Activated naive CD4-positive, alpha-beta T cell treated with anti-CD3 and anti-CD28 coated beads for 36 hours (primary cell): ENCODE measurements at regions of chr1 and their contacts with region 1.

Region 1: GRCh38 chr1:169485544-169486278 is at the start of gene SLC19A2:
- DNase-seq: peak; percentile 96
- H3K4me3 Mint-ChIP-seq: peak within 1 kb of the TSS; percentile 89
- H3K27ac Mint-ChIP-seq: peak within 1 kb of the TSS; percentile 80
- H3K4me1 Mint-ChIP-seq: peaks cover 48% of the 10 kb centered on the region
- H3K27me3 Mint-ChIP-seq: no peaks in the 10 kb centered on the region
- total RNA-seq, gene SLC19A2: 3.2 to 3.6 TPM

Region 2: DNA sequence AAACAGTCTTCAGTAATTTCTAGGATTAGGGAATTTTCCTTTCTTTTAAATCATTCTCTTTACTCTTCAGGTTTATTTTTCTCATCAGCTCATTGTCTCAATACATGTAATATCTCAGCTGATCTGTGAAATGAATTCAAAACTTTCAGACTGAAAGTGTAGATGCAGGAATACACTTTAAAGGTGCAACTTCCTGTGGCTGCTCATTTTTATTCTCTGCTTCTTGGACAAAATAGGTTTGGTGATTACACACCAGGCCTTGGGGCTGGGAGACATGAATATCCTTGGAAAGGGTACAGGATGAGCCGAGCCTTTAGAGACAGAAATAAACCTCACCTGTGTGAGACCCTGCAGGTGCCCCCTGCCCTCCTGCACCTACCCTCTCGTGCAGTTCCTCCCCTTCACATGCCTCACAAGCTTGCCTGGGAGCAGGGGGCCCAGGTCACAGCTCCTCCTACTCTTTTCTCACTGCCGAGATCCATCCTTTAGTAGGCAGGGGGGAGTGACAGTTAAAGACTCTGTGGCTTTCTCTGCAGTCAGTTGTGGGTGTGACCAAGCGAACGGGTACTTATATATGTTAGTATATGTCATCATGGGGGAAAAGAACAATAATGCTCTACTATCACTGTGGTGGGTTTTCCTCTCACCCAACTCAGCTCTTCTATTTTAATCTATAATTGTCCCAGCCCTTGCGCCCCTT is 965.5 kb before region 1 on chr1:
- CTCF ChIA-PET with region 1: no interaction called
- intact Hi-C with region 1: loop called (anchors 10 kb)
- DNase-seq: peak; percentile 59
- H3K4me3 Mint-ChIP-seq: peak overlapping the region; percentile 34
- H3K27ac Mint-ChIP-seq: peak overlapping the region; percentile 74
- H3K4me1 Mint-ChIP-seq: peaks cover 39% of the 10 kb centered on the region
- H3K27me3 Mint-ChIP-seq: no peaks in the 10 kb centered on the region

Region 3: DNA sequence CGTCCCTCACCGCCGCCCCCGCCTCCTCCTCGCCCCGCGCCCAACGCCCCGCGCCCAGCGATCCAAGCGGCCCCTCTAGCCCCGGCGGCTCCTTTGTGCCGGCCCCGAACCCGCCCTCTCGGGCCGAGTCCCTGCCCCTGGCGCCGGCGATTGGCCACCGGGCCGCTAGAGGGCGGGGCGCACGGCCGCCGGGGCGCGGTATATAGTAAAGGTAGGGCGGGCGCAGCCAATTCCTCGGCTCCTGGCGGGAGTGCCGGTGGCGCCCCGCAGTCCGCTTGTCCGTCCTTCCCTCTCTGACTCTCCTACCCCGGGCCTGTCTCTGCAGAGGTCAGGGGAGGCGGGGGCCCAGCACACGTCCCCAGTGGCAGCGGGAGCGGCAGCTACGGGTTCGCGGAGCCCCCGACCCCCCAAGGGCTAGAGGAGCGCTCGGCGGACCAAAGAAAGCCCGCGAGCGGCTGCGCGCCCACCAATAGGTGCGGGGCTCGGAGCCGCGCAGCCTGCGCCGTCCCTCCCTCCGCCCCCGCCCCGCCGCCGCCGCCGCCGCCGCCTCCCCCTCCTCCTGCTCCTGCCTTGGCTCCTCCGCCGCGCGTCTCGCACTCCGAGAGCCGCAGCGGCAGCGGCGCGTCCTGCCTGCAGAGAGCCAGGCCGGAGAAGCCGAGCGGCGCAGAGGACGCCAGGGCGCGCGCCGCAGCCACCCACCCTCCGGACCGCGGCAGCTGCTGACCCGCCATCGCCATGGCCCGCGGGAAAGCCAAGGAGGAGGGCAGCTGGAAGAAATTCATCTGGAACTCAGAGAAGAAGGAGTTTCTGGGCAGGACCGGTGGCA is 379.4 kb before region 1 on chr1 and contains the start of gene ATP1B1:
- CTCF ChIA-PET with region 1: no interaction called
- intact Hi-C with region 1: loop called (anchors 2 kb)
- DNase-seq: peak; percentile 78
- H3K4me3 Mint-ChIP-seq: peak within 1 kb of the TSS; percentile 77
- H3K27ac Mint-ChIP-seq: peak within 1 kb of the TSS; percentile 16
- H3K4me1 Mint-ChIP-seq: peaks cover 43% of the 10 kb centered on the region
- H3K27me3 Mint-ChIP-seq: peaks cover 15% of the 10 kb centered on the region
- total RNA-seq, gene ATP1B1: 5.6 to 6.2 TPM

Region 4: DNA sequence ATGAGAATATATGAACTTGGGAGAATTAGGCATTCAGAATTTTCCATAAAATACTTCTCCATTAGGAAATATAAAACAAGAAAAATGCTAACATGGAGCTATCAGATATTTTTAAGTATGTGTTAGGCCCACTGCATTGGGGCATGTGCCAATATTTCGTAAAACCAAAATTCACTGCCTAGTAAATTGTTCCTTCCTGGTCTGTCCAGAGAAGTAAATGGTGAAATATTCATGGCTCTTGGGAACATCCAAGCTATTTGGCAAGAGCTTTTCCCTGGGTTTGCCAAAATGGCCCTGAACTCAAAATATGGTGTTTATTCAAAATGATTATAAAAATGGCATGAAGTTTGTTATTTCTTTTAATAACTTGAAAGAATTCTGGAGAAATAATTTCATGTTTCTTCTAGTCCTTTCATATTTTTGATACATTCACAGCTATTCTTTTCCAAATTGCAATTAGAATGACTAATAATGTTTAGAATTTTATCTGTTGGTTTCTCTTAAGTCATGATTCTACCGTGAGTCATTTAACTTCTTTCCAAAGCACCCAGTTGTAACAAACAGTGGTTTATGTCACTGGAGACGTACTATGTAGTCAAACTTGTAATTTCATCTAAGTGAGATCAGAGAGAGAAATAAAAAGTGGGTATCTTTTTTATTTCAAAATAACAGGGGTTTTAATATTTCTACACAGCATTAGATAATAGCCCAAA is 25.8 kb after region 1 on chr1:
- CTCF ChIA-PET with region 1: no interaction called
- intact Hi-C with region 1: loop called (anchors 2 kb)
- DNase-seq: no peak
- H3K4me3 Mint-ChIP-seq: no peak overlapping the region
- H3K27ac Mint-ChIP-seq: peak overlapping the region; percentile 34
- H3K4me1 Mint-ChIP-seq: peaks cover 25% of the 10 kb centered on the region
- H3K27me3 Mint-ChIP-seq: no peaks in the 10 kb centered on the region

Region 5: DNA sequence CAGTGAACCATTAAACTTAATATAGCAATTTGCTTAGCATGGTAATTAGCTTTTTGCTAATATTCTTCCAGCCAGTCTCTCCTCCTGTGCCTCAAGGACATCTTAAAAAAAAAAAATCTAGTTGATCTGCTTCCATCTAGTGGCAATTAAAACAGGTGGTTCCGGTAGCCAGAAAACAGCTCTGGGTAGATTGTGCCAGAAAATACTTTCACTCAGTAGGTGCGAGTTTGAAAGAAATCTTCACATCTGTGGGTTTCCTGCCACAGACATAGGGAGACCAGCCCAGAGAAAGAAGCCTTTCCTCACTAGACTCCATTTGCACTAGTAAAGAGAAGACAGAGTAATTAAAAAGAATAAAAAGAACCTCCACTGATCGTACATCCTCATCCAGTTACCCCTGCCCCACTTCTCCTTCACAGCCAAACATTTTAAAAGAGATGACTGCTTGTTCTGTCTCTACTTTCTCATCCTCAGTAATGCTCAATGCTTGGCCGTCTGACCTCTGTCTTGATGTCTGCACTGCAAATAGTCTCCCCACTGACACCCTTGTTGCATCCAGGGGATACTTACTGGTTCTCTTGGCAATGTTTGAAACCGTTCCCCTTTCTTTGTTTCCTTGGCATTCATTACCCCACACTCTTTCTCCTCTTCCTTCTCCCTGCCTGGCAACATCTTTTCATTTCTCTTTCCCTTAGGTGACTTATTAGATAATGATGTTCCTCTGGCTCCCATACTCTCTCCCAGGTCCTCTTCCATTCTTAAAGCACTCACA is 208.8 kb after region 1 on chr1:
- CTCF ChIA-PET with region 1: no interaction called
- intact Hi-C with region 1: loop called (anchors 5 kb)
- DNase-seq: peak; percentile 59
- H3K4me3 Mint-ChIP-seq: peak overlapping the region; percentile 32
- H3K27ac Mint-ChIP-seq: peak overlapping the region; percentile 94
- H3K4me1 Mint-ChIP-seq: peaks cover 96% of the 10 kb centered on the region
- H3K27me3 Mint-ChIP-seq: no peaks in the 10 kb centered on the region

Region 6: DNA sequence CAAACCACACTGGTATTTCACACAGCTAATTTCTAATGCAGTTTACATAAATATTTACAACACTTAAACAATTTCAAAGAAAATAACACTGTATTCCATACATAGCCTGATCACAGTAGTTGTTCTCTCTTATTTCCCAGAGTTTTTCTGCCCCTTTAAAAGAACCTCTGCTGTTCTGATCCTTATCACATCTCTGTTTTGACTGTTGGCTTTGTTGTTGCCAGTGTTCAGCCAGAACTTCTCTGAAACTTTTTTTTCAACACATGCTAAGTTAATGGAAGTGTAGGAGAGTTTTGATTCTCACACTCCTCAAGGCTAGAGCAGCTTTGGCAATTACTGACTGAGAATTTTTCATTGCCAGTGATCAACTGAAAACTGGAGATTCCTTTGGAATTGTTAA is 237.1 kb after region 1 on chr1:
- CTCF ChIA-PET with region 1: no interaction called
- intact Hi-C with region 1: no loop called
- DNase-seq: no peak
- H3K4me3 Mint-ChIP-seq: no peak overlapping the region
- H3K27ac Mint-ChIP-seq: no peak overlapping the region
- H3K4me1 Mint-ChIP-seq: no peaks in the 10 kb centered on the region
- H3K27me3 Mint-ChIP-seq: no peaks in the 10 kb centered on the region

Region 7: DNA sequence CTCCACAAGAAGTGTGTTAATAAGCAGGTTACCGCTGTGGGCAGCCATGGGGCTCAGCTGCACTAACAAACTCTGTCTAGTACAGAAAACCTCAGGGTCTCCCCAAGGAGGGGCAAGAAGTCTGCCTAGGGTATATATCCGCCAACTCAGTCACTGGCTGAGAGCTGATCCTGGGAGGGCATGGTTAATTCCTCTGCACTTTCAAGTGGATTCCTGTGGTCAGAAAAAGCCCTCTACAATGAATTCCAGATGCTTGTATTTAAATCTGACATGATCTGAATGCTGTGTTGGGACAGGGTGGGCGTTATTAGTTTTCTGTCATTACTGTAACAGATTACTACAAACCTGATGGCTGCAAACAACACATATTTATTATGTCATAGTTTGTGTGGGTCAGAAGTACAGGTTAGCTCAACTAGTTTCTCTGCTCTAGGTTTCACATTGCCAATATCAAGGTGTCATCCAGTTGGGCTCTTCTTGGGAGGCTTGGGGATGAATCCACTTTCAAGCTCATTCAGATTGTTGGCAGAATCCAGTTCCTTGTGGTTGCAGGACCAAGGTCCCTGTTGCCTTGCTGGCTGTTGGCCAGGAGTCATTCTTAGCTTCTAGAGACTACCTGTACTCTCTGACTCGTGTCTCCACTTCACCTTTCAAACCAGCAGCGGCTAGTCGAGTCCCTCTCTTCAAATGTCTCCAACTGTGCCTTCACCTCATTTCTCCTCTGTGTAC is 256.1 kb after region 1 on chr1:
- CTCF ChIA-PET with region 1: no interaction called
- intact Hi-C with region 1: no loop called
- DNase-seq: no peak
- H3K4me3 Mint-ChIP-seq: no peak overlapping the region
- H3K27ac Mint-ChIP-seq: no peak overlapping the region
- H3K4me1 Mint-ChIP-seq: no peaks in the 10 kb centered on the region
- H3K27me3 Mint-ChIP-seq: peaks cover 6% of the 10 kb centered on the region

Region 8: GRCh38 chr1:170074250-170075157 is 588.8 kb after region 1 on chr1 and contains the start of gene KIFAP3:
- CTCF ChIA-PET with region 1: no interaction called
- intact Hi-C with region 1: loop called (anchors 5 kb)
- DNase-seq: peak; percentile 98
- H3K4me3 Mint-ChIP-seq: peak within 1 kb of the TSS; percentile 92
- H3K27ac Mint-ChIP-seq: peak within 1 kb of the TSS; percentile 74
- H3K4me1 Mint-ChIP-seq: peaks cover 48% of the 10 kb centered on the region
- H3K27me3 Mint-ChIP-seq: no peaks in the 10 kb centered on the region
- total RNA-seq, gene KIFAP3: 8.7 to 8.8 TPM